Activated CD8-positive, alpha-beta memory T cell treated with anti-CD3 and anti-CD28 coated beads, Interleukin-2, amount 10 ng/mL, durations not matched to agents 7 days and 5 days (primary cell): ENCODE measurements at regions of chr2 and their contacts with region 1.

Region 1: DNA sequence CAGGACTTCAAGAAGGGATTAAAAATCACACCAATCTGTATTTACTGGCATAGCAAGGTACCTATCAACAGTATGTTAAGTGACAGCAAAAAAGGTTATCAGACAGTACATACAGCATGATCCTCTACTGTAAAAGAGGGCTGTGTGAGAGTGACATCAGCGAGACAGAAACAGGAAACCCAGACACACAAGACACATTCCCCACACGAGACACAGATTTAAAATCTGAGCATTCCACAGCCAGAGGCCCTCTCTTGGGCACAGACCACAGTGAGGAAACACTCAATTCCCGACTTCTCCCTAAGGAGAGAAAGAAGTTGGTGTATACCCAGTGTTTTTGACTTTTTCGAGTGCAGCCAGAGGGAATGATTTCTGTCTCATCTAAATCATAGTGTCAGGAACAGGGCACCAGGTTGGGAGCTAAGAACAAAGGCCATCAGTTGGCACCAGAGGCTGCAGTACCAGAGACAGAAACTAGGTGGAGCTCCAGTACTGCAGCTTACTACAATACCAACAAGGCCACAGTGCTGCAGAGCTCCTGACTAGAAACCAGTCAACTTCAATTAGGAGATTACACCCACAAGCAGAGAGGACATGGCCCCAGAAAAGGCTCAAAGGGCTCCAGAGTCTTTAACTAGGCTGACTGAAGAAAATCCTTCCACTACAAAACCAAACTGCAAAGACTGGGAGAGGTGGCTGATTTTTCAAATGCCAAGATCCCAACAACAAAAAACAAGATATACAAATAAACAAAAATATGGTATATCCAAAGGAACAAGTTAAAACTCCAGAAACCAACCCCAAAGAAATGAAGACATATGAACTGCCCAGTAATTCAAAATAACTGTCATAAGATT is 41.0 kb downstream of the UNC50 start:
- DNase-seq: peak; percentile 91
- ATAC-seq: peak; percentile 93
- H3K4me3 Mint-ChIP-seq: peak overlapping the region; percentile 2
- H3K27ac Mint-ChIP-seq: peak overlapping the region; percentile 64
- H3K4me1 Mint-ChIP-seq: peaks cover 59% of the 10 kb centered on the region
- H3K27me3 Mint-ChIP-seq: no peaks in the 10 kb centered on the region

Region 2: DNA sequence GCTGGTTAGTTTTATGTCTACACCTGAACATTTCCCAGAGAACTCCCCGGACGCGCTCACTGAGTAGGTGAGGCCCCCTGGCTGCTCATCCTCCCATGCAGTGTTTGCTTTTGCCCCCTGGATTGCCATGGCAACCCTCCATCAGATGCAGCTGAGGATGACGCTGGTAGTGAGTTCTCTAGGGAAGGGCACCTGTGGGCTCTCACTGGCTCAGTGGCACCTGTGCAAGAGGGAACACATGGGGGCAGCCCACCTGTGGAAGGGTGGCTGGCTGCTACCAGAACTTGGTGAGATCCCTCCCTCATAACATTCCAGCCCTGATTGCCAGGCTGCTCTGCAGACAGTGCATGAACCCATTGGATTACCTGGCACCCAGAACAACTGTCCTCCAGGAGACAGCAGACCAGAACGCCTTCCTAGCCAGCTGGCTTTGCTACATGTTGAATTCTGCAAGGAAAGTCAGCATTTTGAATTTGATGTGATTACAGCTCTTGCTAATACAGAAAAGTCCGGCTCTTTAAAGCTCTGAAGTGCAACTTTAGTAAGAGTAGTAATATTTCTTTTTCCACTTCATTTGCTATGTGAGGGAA is 62.7 kb before region 1 on chr2:
- CTCF ChIA-PET with region 1: no interaction called
- DNase-seq: peak; percentile 33
- ATAC-seq: no peak
- H3K4me3 Mint-ChIP-seq: no peak overlapping the region
- H3K27ac Mint-ChIP-seq: no peak overlapping the region
- H3K4me1 Mint-ChIP-seq: peaks cover 6% of the 10 kb centered on the region
- H3K27me3 Mint-ChIP-seq: no peaks in the 10 kb centered on the region

Region 3: DNA sequence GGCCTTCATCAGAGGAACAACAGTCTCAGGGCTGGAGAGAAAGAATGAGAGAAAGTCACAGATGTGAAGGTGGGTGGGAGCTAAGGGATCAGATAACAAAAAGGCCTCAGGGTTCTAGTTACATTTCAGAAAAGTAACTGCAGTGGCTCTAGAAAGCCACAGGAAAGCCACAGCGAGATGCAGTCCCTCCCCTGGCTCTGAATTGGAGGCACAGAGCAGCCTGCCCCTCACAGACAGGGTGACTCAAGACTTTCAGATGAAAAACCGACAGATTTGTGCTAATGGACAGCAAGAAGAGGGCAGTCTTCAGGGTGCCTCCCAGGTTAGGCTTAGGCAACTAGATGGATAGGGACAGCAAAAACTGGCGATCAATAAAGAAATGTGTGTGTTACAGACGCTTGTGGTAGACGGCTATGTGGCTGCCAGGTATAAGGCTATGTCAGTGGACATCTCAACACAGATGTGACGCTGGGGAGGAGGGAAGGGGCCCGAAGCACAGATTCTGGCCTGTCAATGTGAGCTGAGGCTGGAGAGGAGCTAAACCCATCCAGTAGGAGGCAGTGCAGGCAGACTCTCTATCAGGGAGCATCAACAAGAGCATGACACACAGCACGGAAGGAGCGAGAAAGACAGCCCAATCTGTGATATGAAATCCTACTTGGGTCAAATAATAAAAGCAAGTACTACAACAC is 14.8 kb before region 1 on chr2:
- CTCF ChIA-PET with region 1: interaction called, 16 read pairs
- DNase-seq: peak; percentile 89
- ATAC-seq: peak; percentile 79
- H3K4me3 Mint-ChIP-seq: peak overlapping the region; percentile 58
- H3K27ac Mint-ChIP-seq: peak overlapping the region; percentile 95
- H3K4me1 Mint-ChIP-seq: peaks cover 40% of the 10 kb centered on the region
- H3K27me3 Mint-ChIP-seq: no peaks in the 10 kb centered on the region

Region 4: GRCh38 chr2:98704499-98705332 is 55.4 kb after region 1 on chr2:
- CTCF ChIA-PET with region 1: interaction called, 14 read pairs
- DNase-seq: no peak
- ATAC-seq: no peak
- H3K4me3 Mint-ChIP-seq: no peak overlapping the region
- H3K27ac Mint-ChIP-seq: no peak overlapping the region
- H3K4me1 Mint-ChIP-seq: peaks cover 39% of the 10 kb centered on the region
- H3K27me3 Mint-ChIP-seq: no peaks in the 10 kb centered on the region

Region 5: DNA sequence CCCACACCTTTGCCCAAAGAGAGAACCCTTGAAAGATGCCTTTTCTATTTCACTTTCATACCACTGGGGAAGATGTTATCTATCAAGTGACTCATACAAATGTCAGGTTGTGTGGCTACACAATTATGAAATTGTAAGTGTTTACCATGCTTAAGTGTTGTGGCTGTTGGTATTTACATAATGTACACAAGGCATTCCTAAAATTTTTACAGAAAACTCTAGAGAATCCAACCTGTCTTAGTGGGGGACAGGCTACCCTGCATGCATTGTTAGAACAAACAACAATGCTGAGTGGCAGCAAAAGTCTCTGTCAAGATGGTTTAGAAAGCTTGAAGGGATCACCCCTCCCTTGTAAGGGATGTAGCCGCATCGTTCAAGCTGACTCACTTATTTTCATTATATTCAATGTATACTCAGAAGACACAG is 87.1 kb after region 1 on chr2:
- CTCF ChIA-PET with region 1: interaction called, 20 read pairs
- DNase-seq: peak; percentile 62
- ATAC-seq: peak; percentile 66
- H3K4me3 Mint-ChIP-seq: peak overlapping the region; percentile 23
- H3K27ac Mint-ChIP-seq: peak overlapping the region; percentile 76
- H3K4me1 Mint-ChIP-seq: peaks cover 63% of the 10 kb centered on the region
- H3K27me3 Mint-ChIP-seq: no peaks in the 10 kb centered on the region

Region 6: GRCh38 chr2:98771721-98772524 is 122.6 kb after region 1 on chr2:
- CTCF ChIA-PET with region 1: interaction called, 14 read pairs
- DNase-seq: peak; percentile 83
- ATAC-seq: peak; percentile 70
- H3K4me3 Mint-ChIP-seq: peak overlapping the region; percentile 86
- H3K27ac Mint-ChIP-seq: peak overlapping the region; percentile 95
- H3K4me1 Mint-ChIP-seq: peaks cover 60% of the 10 kb centered on the region
- H3K27me3 Mint-ChIP-seq: no peaks in the 10 kb centered on the region

Region 7: DNA sequence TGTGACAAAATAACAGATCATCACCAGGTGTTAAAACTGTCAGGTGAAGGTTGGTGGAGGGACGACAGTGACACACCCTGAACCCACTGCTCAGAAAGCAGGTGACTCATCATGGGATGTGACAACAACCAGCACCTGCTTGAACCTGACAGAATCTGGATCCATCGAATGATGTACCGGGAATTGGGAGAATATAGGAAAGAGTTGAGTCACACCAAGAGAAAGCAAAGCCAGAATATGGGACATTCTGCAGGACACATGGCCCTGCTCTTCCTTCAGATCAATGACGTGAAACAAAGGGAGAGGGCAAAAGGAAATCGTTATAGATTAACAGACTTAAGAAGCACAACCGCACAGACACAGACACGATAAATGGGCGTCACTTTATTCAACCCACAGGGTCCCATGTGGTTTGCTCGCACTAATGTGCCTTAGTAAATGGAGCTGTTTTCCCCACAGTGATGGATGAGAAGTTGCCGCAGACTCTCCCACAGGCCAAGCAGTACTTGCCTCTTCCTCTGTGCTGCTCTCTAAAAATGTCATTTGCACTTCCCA is 186.5 kb after region 1 on chr2:
- CTCF ChIA-PET with region 1: interaction called, 53 read pairs
- DNase-seq: peak; percentile 69
- ATAC-seq: peak; percentile 68
- H3K4me3 Mint-ChIP-seq: peak overlapping the region; percentile 36
- H3K27ac Mint-ChIP-seq: peak overlapping the region; percentile 75
- H3K4me1 Mint-ChIP-seq: peaks cover 38% of the 10 kb centered on the region
- H3K27me3 Mint-ChIP-seq: peaks cover 5% of the 10 kb centered on the region